ENCODE measurements at regions of chr13 and their contacts with region 1.

Region 1: DNA sequence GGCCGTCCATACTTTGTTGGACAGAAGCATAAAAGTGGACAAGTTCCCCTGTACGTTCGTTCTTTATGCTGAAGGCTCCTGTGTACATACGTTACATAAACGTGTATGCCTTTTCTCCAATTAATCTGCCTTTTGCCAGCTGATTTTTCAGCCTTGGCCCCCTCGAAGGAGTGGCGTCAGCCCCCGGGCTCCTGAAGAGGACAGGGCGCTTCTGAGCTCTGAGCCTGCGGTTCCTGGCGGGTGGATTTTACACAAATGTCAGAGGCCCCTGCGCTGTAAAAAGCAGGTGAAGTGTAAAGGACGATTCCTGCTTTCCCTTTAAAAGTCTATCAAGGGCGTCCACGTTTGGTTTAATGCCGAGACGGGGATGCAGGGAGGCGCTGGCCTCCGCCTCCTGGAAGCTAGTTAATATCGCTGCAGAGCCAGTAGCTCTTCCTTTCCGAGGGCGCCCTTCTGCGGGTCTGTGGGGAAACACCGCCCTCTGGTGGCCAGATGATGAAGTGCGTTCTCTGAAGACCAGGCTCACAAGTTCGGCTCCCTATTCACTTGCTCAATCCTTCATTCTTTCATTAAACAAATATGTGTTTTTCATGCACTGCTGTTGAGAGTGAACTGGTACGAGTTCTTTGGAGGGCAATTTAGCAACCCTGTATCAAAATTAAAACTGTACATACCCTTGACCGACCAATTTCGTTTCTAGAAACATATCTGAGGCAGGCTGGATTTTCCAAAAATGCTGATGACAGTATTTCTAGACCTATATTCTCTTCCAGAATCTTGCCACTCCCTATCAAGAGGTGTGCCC is 62.0 kb downstream of the GPR12 start:
- DNase-seq: peak; percentile 88
- H3K4me3 ChIP-seq: no peak overlapping the region
- H3K27ac ChIP-seq: no peak overlapping the region
- H3K4me1 ChIP-seq: no peaks in the 10 kb centered on the region
- H3K27me3 ChIP-seq: peaks cover 0 to 4% of the 10 kb centered on the region in 2 experiments
- CTCF ChIP-seq: peak; percentile 89 to 92
- POLR2A ChIP-seq: no peak

Region 2: GRCh38 chr13:25574437-25575411 is 1123.9 kb before region 1 on chr13:
- CTCF ChIA-PET with region 1: interaction called, 5 read pairs
- POLR2A ChIA-PET with region 1: no interaction called
- dilution Hi-C with region 1: no loop called
- intact Hi-C with region 1: loop called (anchors 10 kb)
- DNase-seq: peak; percentile 80
- H3K4me3 ChIP-seq: no peak overlapping the region
- H3K27ac ChIP-seq: no peak overlapping the region
- H3K4me1 ChIP-seq: no peaks in the 10 kb centered on the region
- H3K27me3 ChIP-seq: peaks cover 2% of the 10 kb centered on the region in 2 experiments
- CTCF ChIP-seq: peak; percentile 72 to 78
- POLR2A ChIP-seq: no peak

Region 3: GRCh38 chr13:26221721-26222519 is 476.7 kb before region 1 on chr13 and contains the start of gene RNF6:
- CTCF ChIA-PET with region 1: interaction called, 13 read pairs
- POLR2A ChIA-PET with region 1: interaction called, 3 read pairs
- dilution Hi-C with region 1: no loop called
- intact Hi-C with region 1: loop called (anchors 1 kb)
- DNase-seq: peak; percentile 98
- H3K4me3 ChIP-seq: peak within 1 kb of the TSS; percentile 51 to 98 (median 79)
- H3K27ac ChIP-seq: peak within 1 kb of the TSS; percentile 89
- H3K4me1 ChIP-seq: peaks cover 21% of the 10 kb centered on the region
- H3K27me3 ChIP-seq: peaks cover 0 to 10% of the 10 kb centered on the region in 2 experiments
- CTCF ChIP-seq: no peak
- POLR2A ChIP-seq: peak; percentile 75
- total RNA-seq, gene RNF6: 36.4 and 38.3 TPM in 2 replicates

Region 4: GRCh38 chr13:26482451-26483197 is 216.0 kb before region 1 on chr13:
- CTCF ChIA-PET with region 1: interaction called, 257 read pairs
- POLR2A ChIA-PET with region 1: interaction called, 3 read pairs
- dilution Hi-C with region 1: loop called (anchors 25 kb)
- intact Hi-C with region 1: loop called (anchors 1 kb)
- DNase-seq: peak; percentile 79
- H3K4me3 ChIP-seq: peak overlapping the region in 1 of 3 experiments; percentile 40
- H3K27ac ChIP-seq: no peak overlapping the region
- H3K4me1 ChIP-seq: peaks cover 2% of the 10 kb centered on the region
- H3K27me3 ChIP-seq: no peaks in the 10 kb centered on the region
- CTCF ChIP-seq: peak; percentile 80 to 85
- POLR2A ChIP-seq: no peak

Region 5: DNA sequence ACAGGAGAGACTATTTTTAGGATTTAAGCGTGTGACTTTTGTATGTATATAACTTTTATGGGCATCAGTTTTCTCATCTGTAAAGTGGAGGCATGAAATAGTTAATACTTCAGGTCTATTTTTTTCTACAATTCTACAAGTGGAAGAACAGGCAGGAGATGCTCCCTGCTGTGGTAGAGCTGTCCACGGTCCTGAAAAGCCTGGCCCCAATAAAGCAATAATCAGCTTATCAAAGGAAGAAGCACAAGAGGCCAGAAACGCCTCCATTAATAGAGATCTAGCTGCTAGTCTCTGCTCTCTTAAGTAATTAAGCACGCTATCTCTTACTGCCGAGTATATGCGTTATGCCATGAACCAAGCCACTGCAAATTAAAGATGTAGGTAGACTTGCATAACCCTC is 169.2 kb before region 1 on chr13:
- CTCF ChIA-PET with region 1: interaction called, 30 read pairs
- POLR2A ChIA-PET with region 1: no interaction called
- dilution Hi-C with region 1: no loop called
- intact Hi-C with region 1: no loop called
- DNase-seq: peak; percentile 71
- H3K4me3 ChIP-seq: no peak overlapping the region
- H3K27ac ChIP-seq: no peak overlapping the region
- H3K4me1 ChIP-seq: no peaks in the 10 kb centered on the region
- H3K27me3 ChIP-seq: no peaks in the 10 kb centered on the region
- CTCF ChIP-seq: no peak
- POLR2A ChIP-seq: no peak

Region 6: GRCh38 chr13:26601669-26602068 is 96.9 kb before region 1 on chr13:
- CTCF ChIA-PET with region 1: interaction called, 10 read pairs
- POLR2A ChIA-PET with region 1: no interaction called
- dilution Hi-C with region 1: no loop called
- intact Hi-C with region 1: no loop called
- DNase-seq: peak; percentile 79
- H3K4me3 ChIP-seq: no peak overlapping the region
- H3K27ac ChIP-seq: no peak overlapping the region
- H3K4me1 ChIP-seq: peaks cover 19% of the 10 kb centered on the region
- H3K27me3 ChIP-seq: no peaks in the 10 kb centered on the region
- CTCF ChIP-seq: peak in 1 of 2 donors; percentile 17
- POLR2A ChIP-seq: no peak

Region 7: DNA sequence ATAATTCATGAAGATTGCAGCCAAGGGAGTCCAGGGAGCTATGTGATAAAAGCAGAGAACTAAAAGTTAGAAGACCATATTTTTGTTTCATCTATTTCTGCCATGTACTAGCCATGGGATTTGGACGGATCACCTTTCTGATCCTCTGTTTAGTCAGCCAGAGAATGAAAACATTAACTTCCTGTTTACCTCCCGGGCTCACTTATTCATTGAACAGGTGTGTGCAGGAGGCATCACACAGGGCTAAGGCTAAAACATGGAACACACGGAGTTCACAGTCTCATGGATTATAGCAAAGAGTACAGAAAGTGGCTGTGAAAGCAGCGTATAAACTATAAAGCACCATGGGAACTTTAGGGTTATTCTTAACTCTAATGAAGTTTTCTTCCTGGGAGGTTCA is 34.8 kb before region 1 on chr13:
- CTCF ChIA-PET with region 1: interaction called, 10 read pairs
- POLR2A ChIA-PET with region 1: no interaction called
- dilution Hi-C with region 1: no loop called
- intact Hi-C with region 1: no loop called
- DNase-seq: peak; percentile 60
- H3K4me3 ChIP-seq: no peak overlapping the region
- H3K27ac ChIP-seq: no peak overlapping the region
- H3K4me1 ChIP-seq: peaks cover 10% of the 10 kb centered on the region
- H3K27me3 ChIP-seq: no peaks in the 10 kb centered on the region
- CTCF ChIP-seq: no peak
- POLR2A ChIP-seq: no peak

Measured in endothelial cell of umbilical vein (primary cell).